ENCODE measurements at regions of chr15 and their contacts with region 1.

Region 1: DNA sequence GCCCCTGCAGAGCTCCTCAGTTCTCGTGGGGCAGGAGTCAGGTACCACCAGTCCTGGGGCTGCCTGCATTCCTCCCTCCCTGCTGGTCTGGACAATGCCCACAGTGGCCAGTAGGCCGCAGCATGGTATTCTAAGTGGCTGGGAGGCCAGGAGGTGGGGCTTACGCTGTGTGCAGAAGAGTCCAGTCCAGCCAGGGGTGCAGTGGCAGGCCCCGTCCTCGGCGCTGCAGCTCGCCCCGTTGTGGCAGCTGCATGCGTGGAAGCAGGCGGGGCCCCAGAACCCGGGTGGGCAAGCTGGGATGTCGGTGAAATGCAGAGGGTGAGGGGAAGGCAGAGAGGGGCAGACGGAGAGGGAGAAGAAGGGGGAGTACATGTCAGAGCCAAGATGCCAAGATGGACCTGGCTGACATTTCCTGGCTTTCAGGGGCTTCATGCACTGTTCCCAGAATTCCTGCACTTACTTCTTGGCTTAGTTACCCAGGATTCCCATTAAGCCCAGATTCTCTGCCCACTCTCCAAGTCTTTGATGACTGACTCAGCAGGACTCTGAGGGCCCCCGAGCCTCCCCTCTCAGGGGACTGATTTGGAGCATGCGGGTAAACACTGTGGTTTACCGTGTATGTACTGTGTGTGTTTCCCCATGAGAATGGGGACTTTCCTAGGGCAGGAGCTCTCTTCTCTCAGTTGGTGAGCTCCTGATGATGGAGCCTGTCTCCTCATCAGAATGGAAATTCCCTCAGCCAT is 47.5 kb downstream of the RAB11A start:
- DNase-seq: no peak
- ATAC-seq: peak; percentile 99
- H3K4me3 ChIP-seq: no peak overlapping the region
- H3K27ac ChIP-seq: no peak overlapping the region
- H3K4me1 ChIP-seq: no peaks in the 10 kb centered on the region
- H3K27me3 ChIP-seq: no peaks in the 10 kb centered on the region
- CTCF ChIP-seq: peak; percentile 53 to 66 (median 60)
- POLR2A ChIP-seq: no peak
- RAD21 ChIP-seq: peak; percentile 72

Region 2: DNA sequence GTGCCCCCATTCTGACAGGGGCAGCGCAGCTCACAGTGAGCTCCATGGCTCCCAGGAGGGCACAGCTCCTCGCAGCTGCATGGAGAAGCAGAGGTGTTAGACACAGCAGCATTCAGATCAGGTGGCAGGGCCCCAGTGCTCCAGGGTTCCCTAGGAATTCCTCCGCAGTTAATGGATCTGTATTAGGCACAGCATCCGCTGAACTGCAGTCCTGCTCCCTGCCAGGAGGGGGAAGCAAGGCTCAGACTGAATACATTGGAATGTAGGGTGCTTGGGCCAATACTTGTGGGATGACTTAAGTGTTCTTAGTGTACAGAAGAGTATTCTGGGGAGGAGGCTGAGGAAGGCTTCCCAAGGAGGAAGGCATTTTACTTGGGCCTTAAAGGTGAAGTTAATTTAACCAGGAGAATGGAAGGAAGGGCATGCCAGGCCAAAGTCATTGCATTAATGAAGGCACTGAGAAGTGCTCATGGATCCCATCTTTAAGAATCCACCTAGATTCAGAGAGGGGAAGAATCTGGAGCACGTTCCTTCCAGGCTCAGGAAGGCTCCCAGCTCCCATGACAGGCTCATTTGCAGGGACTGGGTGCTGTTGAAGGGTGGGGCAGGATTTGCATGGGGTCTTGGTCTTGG is 64.1 kb after region 1 on chr15:
- CTCF ChIA-PET with region 1: no interaction called
- POLR2A ChIA-PET with region 1: no interaction called
- RAD21 ChIA-PET with region 1: no interaction called
- intact Hi-C with region 1: no loop called
- DNase-seq: peak; percentile 56
- ATAC-seq: peak; percentile 72
- H3K4me3 ChIP-seq: no peak overlapping the region
- H3K27ac ChIP-seq: no peak overlapping the region; the same call in 1 of the 2 replicates
- H3K4me1 ChIP-seq: peaks cover 6 to 26% of the 10 kb centered on the region in 2 experiments
- H3K27me3 ChIP-seq: peaks cover 10% of the 10 kb centered on the region; the same call in 1 of the 2 replicates
- CTCF ChIP-seq: peak; percentile 68 to 84 (median 83); a peak in 5 of 6 replicates
- POLR2A ChIP-seq: no peak
- RAD21 ChIP-seq: peak; percentile 78

Region 3: GRCh38 chr15:66008940-66009562 is 92.2 kb after region 1 on chr15:
- CTCF ChIA-PET with region 1: no interaction called
- POLR2A ChIA-PET with region 1: no interaction called
- RAD21 ChIA-PET with region 1: no interaction called
- intact Hi-C with region 1: no loop called
- DNase-seq: peak; percentile 34
- ATAC-seq: peak; percentile 84
- H3K4me3 ChIP-seq: peak overlapping the region in 1 of 2 experiments; percentile 28; a peak in 1 of 4 replicates
- H3K27ac ChIP-seq: no peak overlapping the region
- H3K4me1 ChIP-seq: peaks cover 0 to 21% of the 10 kb centered on the region in 2 experiments; a peak in 2 of 4 replicates
- H3K27me3 ChIP-seq: no peaks in the 10 kb centered on the region
- CTCF ChIP-seq: no peak
- POLR2A ChIP-seq: no peak
- RAD21 ChIP-seq: no peak

Region 4: GRCh38 chr15:66193066-66193465 is 276.2 kb after region 1 on chr15:
- CTCF ChIA-PET with region 1: no interaction called
- POLR2A ChIA-PET with region 1: no interaction called
- RAD21 ChIA-PET with region 1: no interaction called
- intact Hi-C with region 1: loop called (anchors 1 kb)
- DNase-seq: no peak
- ATAC-seq: no peak
- H3K4me3 ChIP-seq: no peak overlapping the region
- H3K27ac ChIP-seq: no peak overlapping the region
- H3K4me1 ChIP-seq: peaks cover 4 to 12% of the 10 kb centered on the region in 2 experiments; a peak in 3 of 4 replicates
- H3K27me3 ChIP-seq: no peaks in the 10 kb centered on the region
- CTCF ChIP-seq: no peak
- POLR2A ChIP-seq: no peak
- RAD21 ChIP-seq: no peak

Measured in HCT116 (cell line).